Esophagus muscularis mucosa (tissue), 4 donors: ENCODE measurements at regions of chr15 and their contacts with region 1.

Region 1: DNA sequence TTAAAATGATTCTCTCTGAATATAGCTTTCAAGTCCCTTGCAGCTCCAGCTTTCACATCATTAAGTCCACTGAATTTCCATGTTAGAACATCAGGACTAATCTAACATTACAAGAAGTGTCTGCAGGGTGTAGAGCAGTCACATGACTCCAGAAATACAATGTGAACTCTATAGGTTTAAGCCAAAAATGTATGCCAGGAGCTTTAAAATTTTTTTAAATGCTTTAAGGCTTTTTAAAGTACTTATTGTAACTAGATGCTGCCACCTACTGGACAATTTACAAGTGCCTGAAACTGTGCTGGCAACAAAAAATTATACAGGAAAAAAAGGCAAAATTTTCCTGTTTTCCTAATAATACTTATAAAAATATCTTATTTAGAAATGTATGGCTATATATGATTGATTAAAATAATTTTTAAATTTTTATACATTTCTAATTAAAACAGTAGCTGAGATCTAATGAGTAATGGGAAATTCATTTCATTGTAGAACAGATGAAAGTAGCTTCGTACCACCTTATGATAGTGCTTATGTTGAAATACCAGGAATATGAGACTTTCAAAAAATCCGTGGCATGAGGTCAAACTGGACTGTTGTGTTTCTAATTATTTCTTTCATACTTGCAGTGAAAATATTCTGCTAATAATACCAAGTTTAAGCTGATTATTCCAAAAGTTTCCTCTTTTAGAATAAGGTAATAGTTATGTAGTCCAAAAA is 25.7 kb downstream of the FSIP1 start:
- DNase-seq: no peak
- H3K4me3 ChIP-seq: no peak overlapping the region
- H3K27ac ChIP-seq: no peak overlapping the region
- H3K4me1 ChIP-seq: peaks cover 0 to 29% (median 25%) of the 10 kb centered on the region in 4 donors
- H3K27me3 ChIP-seq: no peaks in the 10 kb centered on the region
- CTCF ChIP-seq: peak; percentile 78 to 90 (median 87)
- EP300 ChIP-seq: no peak
- POLR2A ChIP-seq: no peak

Region 2: DNA sequence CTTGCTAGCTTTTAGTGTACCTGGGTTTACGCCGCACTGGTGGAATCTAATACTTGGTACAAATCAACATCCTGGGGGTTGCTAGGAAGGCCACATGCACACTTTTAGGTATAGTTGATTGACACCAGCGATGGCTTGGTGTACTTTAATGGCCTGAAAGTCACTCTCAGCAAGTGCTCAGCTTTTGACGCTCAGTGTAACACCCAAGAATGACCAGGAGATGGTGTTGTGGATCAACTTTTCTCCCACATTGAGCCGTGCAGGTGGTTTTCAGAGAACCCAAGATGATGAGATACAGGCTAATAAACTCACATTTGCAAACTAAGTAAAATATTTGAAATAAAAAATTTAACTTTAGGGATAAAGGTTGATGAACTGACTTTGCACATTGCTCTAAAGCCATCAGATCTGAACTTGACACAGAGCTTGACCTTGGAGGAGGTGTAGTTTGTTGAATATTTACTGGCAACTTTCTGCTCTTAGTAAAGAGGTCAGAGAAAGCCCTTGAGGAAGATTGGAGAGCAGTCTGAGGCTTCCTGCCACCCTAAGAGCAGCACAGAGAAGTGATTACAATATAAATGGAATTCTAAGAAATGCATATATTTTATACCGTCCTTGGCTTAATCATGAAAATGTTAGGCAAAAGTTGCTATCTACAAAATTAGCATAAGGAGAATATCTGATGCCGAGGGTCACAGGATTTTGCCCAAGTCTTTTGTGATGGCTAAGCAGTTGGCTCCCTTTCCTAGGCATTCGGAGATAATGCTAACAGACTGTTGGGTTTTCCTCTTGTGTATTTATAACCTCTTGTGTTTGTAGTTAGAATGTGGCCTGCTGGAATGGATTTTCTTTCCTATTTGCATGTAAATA is 1048.9 kb before region 1 on chr15:
- intact Hi-C with region 1: loop called (anchors 5 kb)
- DNase-seq: no peak
- H3K4me3 ChIP-seq: no peak overlapping the region
- H3K27ac ChIP-seq: no peak overlapping the region
- H3K4me1 ChIP-seq: no peaks in the 10 kb centered on the region
- H3K27me3 ChIP-seq: peaks cover 0 to 4% (median 0%) of the 10 kb centered on the region in 4 donors
- CTCF ChIP-seq: peak; percentile 72 to 80 (median 74)
- EP300 ChIP-seq: no peak
- POLR2A ChIP-seq: no peak

Region 3: GRCh38 chr15:39171944-39172368 is 585.0 kb before region 1 on chr15:
- intact Hi-C with region 1: loop called (anchors 10 kb)
- DNase-seq: no peak
- H3K4me3 ChIP-seq: no peak overlapping the region
- H3K27ac ChIP-seq: peak overlapping the region; percentile 61 to 78 (median 66)
- H3K4me1 ChIP-seq: peaks cover 14 to 35% (median 31%) of the 10 kb centered on the region in 4 donors
- H3K27me3 ChIP-seq: no peaks in the 10 kb centered on the region
- CTCF ChIP-seq: peak; percentile 42 to 55 (median 45)
- EP300 ChIP-seq: no peak
- POLR2A ChIP-seq: no peak

Region 4: DNA sequence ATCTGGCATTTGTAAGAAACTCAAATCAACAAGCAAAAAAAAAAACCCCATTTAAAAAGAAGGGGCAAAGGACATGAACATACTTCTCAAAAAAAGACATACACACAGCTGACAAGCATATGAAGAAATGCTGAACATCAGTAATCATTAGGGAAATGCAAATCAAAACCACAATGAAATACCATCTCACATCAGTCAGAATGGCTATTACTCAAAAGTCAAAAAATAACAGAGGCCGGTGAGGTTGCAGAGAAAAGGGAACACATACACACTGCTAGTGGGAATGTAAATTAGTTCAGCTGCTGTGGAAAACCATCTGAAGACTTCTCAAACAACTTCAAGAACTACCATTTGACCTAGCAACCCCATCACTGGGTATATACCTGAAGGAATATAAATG is 375.4 kb before region 1 on chr15:
- intact Hi-C with region 1: no loop called
- DNase-seq: no peak
- H3K4me3 ChIP-seq: no peak overlapping the region
- H3K27ac ChIP-seq: no peak overlapping the region
- H3K4me1 ChIP-seq: no peaks in the 10 kb centered on the region
- H3K27me3 ChIP-seq: no peaks in the 10 kb centered on the region
- CTCF ChIP-seq: no peak
- EP300 ChIP-seq: no peak
- POLR2A ChIP-seq: no peak

Region 5: GRCh38 chr15:39419651-39420050 is 337.3 kb before region 1 on chr15:
- intact Hi-C with region 1: no loop called
- DNase-seq: no peak
- H3K4me3 ChIP-seq: no peak overlapping the region
- H3K27ac ChIP-seq: no peak overlapping the region
- H3K4me1 ChIP-seq: peaks cover 0 to 15% (median 12%) of the 10 kb centered on the region in 4 donors
- H3K27me3 ChIP-seq: no peaks in the 10 kb centered on the region
- CTCF ChIP-seq: no peak
- EP300 ChIP-seq: no peak
- POLR2A ChIP-seq: no peak

Region 6: DNA sequence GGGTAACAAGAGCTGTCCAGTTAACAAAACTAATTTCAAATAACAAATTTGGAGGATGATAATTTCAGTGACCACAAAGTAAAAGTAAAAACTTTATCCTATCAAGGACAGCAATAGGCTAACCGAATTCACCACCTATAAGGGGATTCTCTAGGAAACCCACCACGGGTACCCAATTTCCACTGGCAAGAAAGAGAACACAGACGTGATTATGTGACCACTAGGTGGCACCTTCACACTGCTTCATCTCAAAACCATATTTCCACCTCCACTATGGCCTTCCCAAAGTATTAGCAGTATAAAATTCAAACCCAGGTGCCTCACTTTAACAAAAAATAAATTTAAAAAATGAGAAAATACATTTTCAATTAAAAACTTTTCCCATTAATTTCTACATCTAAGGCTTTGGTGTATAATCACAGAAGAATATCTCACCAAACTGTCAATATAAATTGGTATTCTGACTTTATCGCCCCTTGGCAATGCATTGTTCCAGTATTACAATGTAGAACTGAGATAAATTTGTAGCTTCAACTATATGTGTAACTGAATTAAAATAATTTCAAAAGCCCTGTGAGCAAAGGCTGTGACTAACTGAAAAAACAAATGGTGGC is 70.9 kb before region 1 on chr15:
- intact Hi-C with region 1: loop called (anchors 1 kb)
- DNase-seq: no peak
- H3K4me3 ChIP-seq: no peak overlapping the region
- H3K27ac ChIP-seq: no peak overlapping the region
- H3K4me1 ChIP-seq: peaks cover 0 to 43% (median 28%) of the 10 kb centered on the region in 4 donors
- H3K27me3 ChIP-seq: no peaks in the 10 kb centered on the region
- CTCF ChIP-seq: peak; percentile 79 to 85 (median 82)
- EP300 ChIP-seq: no peak
- POLR2A ChIP-seq: no peak

Region 7: GRCh38 chr15:39828374-39828931 is 71.5 kb after region 1 on chr15:
- intact Hi-C with region 1: no loop called
- DNase-seq: no peak
- H3K4me3 ChIP-seq: no peak overlapping the region
- H3K27ac ChIP-seq: peak overlapping the region; percentile 59 to 77 (median 68)
- H3K4me1 ChIP-seq: peaks cover 0 to 19% (median 8%) of the 10 kb centered on the region in 4 donors
- H3K27me3 ChIP-seq: no peaks in the 10 kb centered on the region
- CTCF ChIP-seq: no peak
- EP300 ChIP-seq: peak; percentile 83
- POLR2A ChIP-seq: no peak